Cardiac septum (tissue), 1 donor: ENCODE measurements at regions of chr2 and their contacts with region 1.

Region 1: GRCh38 chr2:16553226-16553625 is 112.4 kb downstream of the CYRIA start:
- DNase-seq: no peak

Region 2: GRCh38 chr2:16608661-16609643 is 55.7 kb after region 1 on chr2:
- intact Hi-C with region 1: loop called (anchors 2 kb)
- DNase-seq: peak; percentile 93

Region 3: GRCh38 chr2:16709769-16710168 is 156.5 kb after region 1 on chr2:
- intact Hi-C with region 1: no loop called
- DNase-seq: no peak